Ascending aorta (tissue), 2 donors: ENCODE measurements at regions of chr5 and their contacts with region 1.

Region 1: DNA sequence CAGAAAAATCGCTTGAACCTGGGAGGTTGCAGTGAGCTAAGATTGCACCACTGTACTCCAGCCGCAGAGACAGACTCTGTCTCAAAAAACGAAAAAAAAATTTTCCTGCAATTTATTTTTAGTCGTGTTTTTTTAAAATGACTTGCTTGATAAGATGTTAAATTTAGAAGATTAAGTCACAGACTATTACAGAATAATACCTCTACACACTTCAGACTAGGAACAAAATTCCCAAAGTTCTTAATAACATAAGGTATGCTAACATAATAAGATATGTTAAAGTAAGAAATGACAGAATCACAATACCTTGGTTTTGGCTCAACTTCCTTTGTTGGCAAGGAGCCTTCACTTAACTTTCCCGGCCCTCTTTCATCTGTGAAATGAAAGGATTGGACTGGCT is 59.5 kb upstream of the NPR3 start:
- DNase-seq: no peak
- H3K4me3 ChIP-seq: no peak overlapping the region
- H3K27ac ChIP-seq: peak overlapping the region; percentile 65 to 80
- H3K4me1 ChIP-seq: peaks cover 0 to 6% of the 10 kb centered on the region in 2 donors
- H3K27me3 ChIP-seq: no peaks in the 10 kb centered on the region
- CTCF ChIP-seq: no peak

Region 2: DNA sequence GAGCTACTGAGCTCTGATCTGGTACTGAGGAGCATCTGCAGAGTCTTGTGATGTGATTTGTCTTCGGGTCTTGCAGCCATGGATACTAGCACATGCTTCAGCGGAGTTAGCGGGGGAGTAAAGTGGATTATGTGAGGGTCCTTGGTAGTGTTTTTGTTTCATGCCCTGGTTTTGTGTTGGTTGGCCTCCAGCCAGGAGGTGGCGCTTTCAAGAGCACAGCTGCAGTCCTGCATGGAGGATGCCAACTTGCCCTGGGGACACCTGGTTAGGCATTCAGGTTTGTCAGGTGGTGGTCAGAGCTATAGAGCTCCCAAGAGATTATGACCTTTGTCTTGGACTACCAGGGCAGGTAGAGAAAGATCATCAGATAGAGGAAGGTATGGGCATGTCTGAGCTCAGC is 1644.0 kb before region 1 on chr5:
- intact Hi-C with region 1: no loop called
- DNase-seq: no peak
- H3K4me3 ChIP-seq: no peak overlapping the region
- H3K27ac ChIP-seq: no peak overlapping the region
- H3K4me1 ChIP-seq: no peaks in the 10 kb centered on the region
- H3K27me3 ChIP-seq: no peaks in the 10 kb centered on the region
- CTCF ChIP-seq: no peak

Region 3: GRCh38 chr5:32542216-32543059 is 109.2 kb before region 1 on chr5:
- intact Hi-C with region 1: no loop called
- DNase-seq: no peak
- H3K4me3 ChIP-seq: no peak overlapping the region
- H3K27ac ChIP-seq: no peak overlapping the region
- H3K4me1 ChIP-seq: no peaks in the 10 kb centered on the region
- H3K27me3 ChIP-seq: no peaks in the 10 kb centered on the region
- CTCF ChIP-seq: no peak

Region 4: GRCh38 chr5:32683125-32683524 is 31.5 kb after region 1 on chr5:
- intact Hi-C with region 1: loop called (anchors 2 kb)
- DNase-seq: no peak
- H3K4me3 ChIP-seq: no peak overlapping the region
- H3K27ac ChIP-seq: peak overlapping the region; percentile 54 to 59
- H3K4me1 ChIP-seq: peaks cover 2 to 10% of the 10 kb centered on the region in 2 donors
- H3K27me3 ChIP-seq: no peaks in the 10 kb centered on the region
- CTCF ChIP-seq: no peak

Region 5: DNA sequence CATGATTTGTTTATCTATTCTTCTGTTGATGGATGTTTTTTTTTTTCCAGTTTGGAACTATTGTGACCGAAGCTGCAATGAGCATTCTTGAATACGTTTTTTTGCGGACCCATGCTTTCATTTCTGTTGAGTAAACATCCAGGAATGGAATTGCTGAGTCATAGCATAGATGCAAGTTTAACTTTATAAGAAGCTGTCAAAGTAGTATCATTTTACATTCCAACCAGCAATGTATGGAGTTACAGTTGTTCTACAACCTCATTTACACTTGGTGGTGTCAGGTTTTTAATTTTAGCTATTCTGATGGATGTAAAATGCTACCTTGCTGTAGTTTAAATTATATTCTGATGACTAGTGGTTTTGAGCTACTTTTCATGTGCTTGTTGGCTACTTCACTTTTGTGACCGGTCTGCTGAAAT is 108.5 kb after region 1 on chr5:
- intact Hi-C with region 1: no loop called
- DNase-seq: no peak
- H3K4me3 ChIP-seq: peak overlapping the region; percentile 25 to 47
- H3K27ac ChIP-seq: peak overlapping the region; percentile 19 to 57
- H3K4me1 ChIP-seq: no peaks in the 10 kb centered on the region
- H3K27me3 ChIP-seq: no peaks in the 10 kb centered on the region
- CTCF ChIP-seq: no peak